ENCODE measurements at regions of chr17 and their contacts with region 1.

Region 1: GRCh38 chr17:4534026-4534914 is 20.9 kb downstream of the MYBBP1A start:
- DNase-seq: no peak
- H3K4me3 ChIP-seq: no peak overlapping the region
- H3K27ac ChIP-seq: no peak overlapping the region
- H3K4me1 ChIP-seq: peaks cover 5% of the 10 kb centered on the region
- H3K27me3 ChIP-seq: no peaks in the 10 kb centered on the region
- CTCF ChIP-seq: no peak

Region 2: GRCh38 chr17:4476511-4477070 is 57.7 kb before region 1 on chr17:
- CTCF ChIA-PET with region 1: no interaction called
- dilution Hi-C with region 1: loop called (anchors 5 kb)
- in situ Hi-C with region 1: no loop called
- intact Hi-C with region 1: no loop called
- DNase-seq: no peak
- H3K4me3 ChIP-seq: no peak overlapping the region
- H3K27ac ChIP-seq: no peak overlapping the region
- H3K4me1 ChIP-seq: peaks cover 11% of the 10 kb centered on the region
- H3K27me3 ChIP-seq: no peaks in the 10 kb centered on the region
- CTCF ChIP-seq: no peak

Region 3: DNA sequence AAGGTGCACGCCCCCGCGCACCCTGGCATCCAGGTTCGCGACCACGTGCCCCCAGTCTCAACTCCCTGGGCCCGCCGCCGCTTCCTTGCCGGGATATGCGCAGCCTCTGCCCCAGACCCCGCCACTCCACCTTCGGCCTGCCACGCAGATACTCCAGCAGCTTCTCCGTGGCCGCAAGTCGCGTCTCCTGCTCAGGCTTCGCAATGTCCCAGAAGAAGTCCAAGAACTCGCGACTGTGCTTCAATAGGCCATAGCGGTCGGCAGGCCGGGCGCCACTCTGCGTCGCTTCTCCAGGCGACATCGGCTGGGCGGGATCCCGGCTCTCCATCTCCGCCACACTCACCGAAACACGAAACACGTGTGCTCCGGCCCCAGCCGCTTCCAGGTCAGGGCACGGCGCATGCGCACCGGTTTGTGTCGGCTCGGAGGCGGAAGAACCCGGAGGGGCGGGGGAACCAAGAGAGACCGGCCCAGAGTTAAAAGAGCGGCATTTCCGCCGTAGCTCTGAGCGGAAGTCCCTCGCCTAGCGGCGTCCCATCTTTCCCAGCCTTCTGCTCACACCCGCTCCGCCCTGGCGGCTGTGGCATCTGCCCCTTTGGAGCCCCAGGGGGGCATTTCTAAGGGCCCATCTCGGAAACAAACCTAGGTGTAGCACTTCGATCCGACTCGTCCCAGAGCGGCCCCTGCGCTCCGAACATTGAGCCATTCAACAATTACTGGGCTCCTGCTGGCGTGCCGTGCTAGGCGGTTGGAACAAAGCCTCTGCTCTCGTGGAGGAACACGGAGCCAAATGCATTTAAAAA is 20.9 kb after region 1 on chr17 and contains the start of gene MYBBP1A:
- CTCF ChIA-PET with region 1: no interaction called
- dilution Hi-C with region 1: no loop called
- in situ Hi-C with region 1: no loop called
- intact Hi-C with region 1: loop called (anchors 2 kb)
- DNase-seq: peak; percentile 92
- H3K4me3 ChIP-seq: peak within 1 kb of the TSS; percentile 78 to 100 (median 91)
- H3K27ac ChIP-seq: peak within 1 kb of the TSS; percentile 67
- H3K4me1 ChIP-seq: peaks cover 48% of the 10 kb centered on the region
- H3K27me3 ChIP-seq: no peaks in the 10 kb centered on the region
- CTCF ChIP-seq: no peak
- total RNA-seq, gene MYBBP1A: 63.2 to 105 TPM

Region 4: DNA sequence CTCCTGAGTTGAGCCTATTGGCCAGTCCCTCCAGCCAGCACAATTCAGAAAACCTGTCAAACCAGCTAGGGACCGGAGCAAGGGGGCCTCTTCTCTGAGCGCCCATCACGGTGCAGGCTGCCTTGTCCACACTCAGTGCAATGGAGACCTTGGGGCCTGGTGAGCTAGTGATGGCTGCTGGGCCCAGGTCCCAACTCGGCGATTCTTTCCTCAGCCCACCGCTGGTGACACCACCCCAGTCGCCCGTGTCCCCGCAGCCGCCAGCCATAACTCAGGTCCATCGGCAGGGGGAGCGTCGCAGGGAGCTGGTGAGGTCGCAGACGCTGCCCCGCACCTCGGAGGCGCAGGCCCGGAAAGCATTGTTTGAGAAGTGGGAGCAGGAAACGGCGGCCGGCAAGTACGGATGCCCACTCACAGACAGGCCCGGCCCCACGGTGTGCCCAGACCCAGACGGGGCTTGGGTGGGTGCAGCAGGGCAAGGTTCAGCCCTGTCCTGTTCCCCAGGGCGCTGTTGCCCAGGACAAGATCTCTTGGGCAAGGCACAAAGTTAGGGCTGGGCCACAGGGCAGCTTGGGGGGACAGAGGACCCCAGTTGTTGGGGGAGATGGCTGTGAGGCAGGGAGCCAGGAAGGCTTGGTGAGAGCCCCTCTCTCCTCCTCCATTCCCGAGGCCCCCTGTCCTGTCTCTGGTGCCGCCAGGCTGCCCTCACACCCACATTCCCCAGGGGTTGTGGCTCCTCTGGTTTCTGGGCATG is 60.8 kb after region 1 on chr17:
- CTCF ChIA-PET with region 1: no interaction called
- dilution Hi-C with region 1: no loop called
- in situ Hi-C with region 1: no loop called
- intact Hi-C with region 1: no loop called
- DNase-seq: no peak
- H3K4me3 ChIP-seq: no peak overlapping the region
- H3K27ac ChIP-seq: no peak overlapping the region
- H3K4me1 ChIP-seq: peaks cover 4% of the 10 kb centered on the region
- H3K27me3 ChIP-seq: peaks cover 6% of the 10 kb centered on the region
- CTCF ChIP-seq: no peak

Measured in mammary epithelial cell (primary cell).